GM12878 (cell line): ENCODE measurements at regions of chr15 and their contacts with region 1.

Region 1: DNA sequence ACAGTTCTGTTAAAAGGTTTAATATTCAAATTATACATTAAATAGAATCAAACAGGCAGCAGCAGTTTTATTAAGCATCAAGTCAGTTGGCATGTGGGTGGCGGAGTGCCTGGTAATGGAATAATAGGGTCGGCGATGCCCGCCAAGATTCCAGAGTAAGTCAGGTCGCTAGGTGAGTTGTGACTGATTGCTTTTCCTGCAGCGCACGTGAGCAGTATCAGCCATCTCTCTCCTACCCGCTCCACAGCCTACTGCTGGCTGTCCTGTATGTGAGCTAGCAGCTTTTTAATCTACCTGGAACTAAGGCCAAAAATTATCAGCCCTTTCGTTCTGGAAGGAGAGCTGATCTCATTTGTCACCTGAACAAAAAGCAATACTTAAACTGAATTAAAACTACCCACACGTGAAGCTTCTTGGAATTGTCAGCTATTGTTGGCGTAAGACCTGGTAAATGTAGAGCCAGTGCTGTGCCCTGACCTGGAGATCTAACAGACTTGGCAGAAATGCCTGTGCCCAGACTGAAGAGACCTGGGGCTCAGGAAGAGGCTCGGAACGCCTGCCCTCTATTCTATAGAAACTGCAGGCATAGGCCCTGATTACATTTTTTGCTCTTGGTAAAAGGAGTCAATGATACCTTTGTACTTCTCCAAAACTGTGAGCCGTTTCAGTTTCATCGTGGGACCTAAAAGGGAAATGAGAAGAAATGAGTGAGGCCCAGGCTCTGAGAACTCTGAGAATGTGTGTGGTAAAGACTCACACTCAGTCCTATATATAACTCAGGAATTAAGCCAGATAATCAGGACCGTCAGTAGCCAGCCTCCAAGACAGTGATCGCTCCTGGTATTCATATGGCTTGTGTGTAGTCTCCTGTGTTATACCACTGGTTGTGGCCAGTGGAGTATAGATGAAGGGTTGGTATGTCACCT is 21.9 kb downstream of the IDH3A start:
- DNase-seq: peak; percentile 85
- ATAC-seq: peak; percentile 81
- H3K4me3 ChIP-seq: no peak overlapping the region; the same call in 1 of the 2 replicates
- H3K27ac ChIP-seq: peak overlapping the region; percentile 88
- H3K4me1 ChIP-seq: peaks cover 79% of the 10 kb centered on the region
- H3K27me3 ChIP-seq: no peaks in the 10 kb centered on the region
- CTCF ChIP-seq: no peak
- EP300 ChIP-seq: peak; percentile 36 to 70; a peak in 2 of 4 replicates
- POLR2A ChIP-seq: no peak
- RAD21 ChIP-seq: no peak

Region 2: GRCh38 chr15:78149068-78149804 is 21.9 kb before region 1 on chr15 and contains the start of gene IDH3A:
- CTCF ChIA-PET with region 1: interaction called, 38 read pairs
- POLR2A ChIA-PET with region 1: interaction called, 75 read pairs
- RAD21 ChIA-PET with region 1: interaction called, 53 read pairs
- SMC1A ChIA-PET with region 1: interaction called, 152 read pairs
- in situ Hi-C with region 1: no loop called
- intact Hi-C with region 1: loop called (anchors 2 kb)
- DNase-seq: peak; percentile 80
- ATAC-seq: peak; percentile 91
- H3K4me3 ChIP-seq: peak within 1 kb of the TSS; percentile 87
- H3K27ac ChIP-seq: peak within 1 kb of the TSS; percentile 84
- H3K4me1 ChIP-seq: peaks cover 13% of the 10 kb centered on the region
- H3K27me3 ChIP-seq: no peaks in the 10 kb centered on the region
- CTCF ChIP-seq: no peak
- EP300 ChIP-seq: no peak
- POLR2A ChIP-seq: peak; percentile 94
- RAD21 ChIP-seq: no peak
- polyA plus RNA-seq, gene IDH3A: 197 to 231 TPM

Region 3: DNA sequence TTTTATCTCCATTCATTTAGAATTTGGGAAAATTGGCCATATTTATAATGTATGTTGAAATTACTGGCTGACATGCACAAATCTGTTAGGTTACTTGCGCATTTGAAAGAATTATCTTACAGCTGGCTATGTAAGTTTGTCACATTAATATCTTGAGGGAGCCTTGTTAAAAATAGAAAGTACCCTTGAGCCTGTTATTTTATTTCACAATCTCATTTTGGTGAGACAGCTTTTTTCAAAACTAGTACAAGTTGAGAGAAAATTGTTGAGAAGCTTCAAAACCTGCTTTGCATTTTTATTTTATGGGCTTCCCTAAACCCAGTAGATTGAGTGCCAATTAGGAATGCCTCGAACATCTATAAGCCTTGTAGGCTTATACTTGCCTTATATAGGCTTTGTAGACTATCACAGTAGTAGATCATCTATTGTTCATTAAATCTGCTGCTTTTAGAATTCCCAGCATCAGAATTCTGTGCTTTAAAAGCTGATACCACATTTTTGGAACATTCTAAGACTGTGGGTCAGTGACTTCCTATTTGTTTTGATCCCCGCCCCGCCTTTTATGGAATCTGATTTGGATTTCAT is 15.7 kb before region 1 on chr15:
- CTCF ChIA-PET with region 1: interaction called, 38 read pairs
- POLR2A ChIA-PET with region 1: interaction called, 75 read pairs
- RAD21 ChIA-PET with region 1: interaction called, 53 read pairs
- SMC1A ChIA-PET with region 1: interaction called, 152 read pairs
- in situ Hi-C with region 1: no loop called
- intact Hi-C with region 1: loop called (anchors 2 kb)
- DNase-seq: no peak
- ATAC-seq: no peak
- H3K4me3 ChIP-seq: no peak overlapping the region
- H3K27ac ChIP-seq: no peak overlapping the region
- H3K4me1 ChIP-seq: peaks cover 6% of the 10 kb centered on the region
- H3K27me3 ChIP-seq: no peaks in the 10 kb centered on the region
- CTCF ChIP-seq: no peak
- EP300 ChIP-seq: no peak
- POLR2A ChIP-seq: no peak
- RAD21 ChIP-seq: no peak

Region 4: DNA sequence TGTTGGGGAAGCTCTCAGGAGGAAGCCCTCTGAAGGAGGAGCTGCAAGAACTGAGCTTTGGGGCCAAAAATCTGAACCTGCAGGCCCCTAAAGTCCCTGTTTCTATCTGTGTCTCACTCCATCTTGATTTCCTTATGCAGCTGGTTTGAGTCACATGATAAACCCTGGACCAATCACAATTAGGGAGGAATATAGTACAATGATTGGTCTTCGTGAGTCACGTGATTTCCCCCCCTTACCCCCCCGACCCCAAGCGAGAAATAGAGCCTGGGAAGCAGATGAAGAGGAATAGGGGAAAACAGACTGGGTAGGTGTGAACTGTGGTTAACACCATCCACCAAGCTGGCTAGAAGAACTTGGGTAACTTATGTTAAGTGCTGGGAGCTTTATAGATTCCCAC is 182.0 kb after region 1 on chr15:
- CTCF ChIA-PET with region 1: no interaction called
- POLR2A ChIA-PET with region 1: no interaction called
- RAD21 ChIA-PET with region 1: no interaction called
- SMC1A ChIA-PET with region 1: no interaction called
- in situ Hi-C with region 1: no loop called
- intact Hi-C with region 1: no loop called
- DNase-seq: peak; percentile 2
- ATAC-seq: peak; percentile 63
- H3K4me3 ChIP-seq: no peak overlapping the region
- H3K27ac ChIP-seq: no peak overlapping the region
- H3K4me1 ChIP-seq: no peaks in the 10 kb centered on the region
- H3K27me3 ChIP-seq: no peaks in the 10 kb centered on the region; a peak in 1 of 4 replicates
- CTCF ChIP-seq: no peak
- EP300 ChIP-seq: no peak
- POLR2A ChIP-seq: no peak
- RAD21 ChIP-seq: no peak